ENCODE measurements at regions of chr5 and their contacts with region 1.

Region 1: GRCh38 chr5:137320056-137321045 is 178.8 kb downstream of the SPOCK1 start:
- DNase-seq: peak; percentile 22
- H3K4me3 Mint-ChIP-seq: no peak overlapping the region
- H3K27ac Mint-ChIP-seq: no peak overlapping the region
- H3K4me1 Mint-ChIP-seq: no peaks in the 10 kb centered on the region
- H3K27me3 Mint-ChIP-seq: peaks cover 11% of the 10 kb centered on the region

Region 2: DNA sequence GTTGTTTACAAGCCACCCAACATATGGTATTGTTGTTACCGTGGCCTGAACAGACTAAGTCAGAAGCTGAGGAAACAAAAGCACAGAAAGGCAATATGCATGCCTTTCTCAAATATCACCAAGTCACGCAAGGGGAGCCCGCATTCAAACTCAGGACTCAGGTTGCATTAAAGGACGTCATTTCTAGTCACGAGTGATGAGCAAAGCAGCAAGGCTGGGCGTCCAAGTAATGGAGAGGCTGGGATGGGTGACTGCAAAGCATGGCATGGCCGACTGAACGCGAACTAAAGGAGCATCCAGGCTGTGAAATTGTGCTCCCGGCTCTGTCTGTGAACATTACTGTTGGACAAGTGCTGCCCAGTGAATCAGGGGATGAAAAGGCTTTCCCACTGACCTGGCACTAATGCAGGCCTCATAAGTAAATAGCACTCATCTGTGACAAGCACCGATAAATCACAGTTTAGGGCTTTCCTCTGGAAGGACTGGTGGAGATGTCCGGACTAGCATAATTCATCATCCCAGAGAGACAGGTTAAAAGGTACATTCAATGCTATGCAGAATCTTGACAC is 24.1 kb before region 1 on chr5:
- CTCF ChIA-PET with region 1: no interaction called
- POLR2A ChIA-PET with region 1: no interaction called
- DNase-seq: no peak
- H3K4me3 Mint-ChIP-seq: no peak overlapping the region
- H3K27ac Mint-ChIP-seq: no peak overlapping the region
- H3K4me1 Mint-ChIP-seq: no peaks in the 10 kb centered on the region
- H3K27me3 Mint-ChIP-seq: peaks cover 2% of the 10 kb centered on the region

Region 3: GRCh38 chr5:137344723-137345322 is 24.5 kb after region 1 on chr5:
- CTCF ChIA-PET with region 1: interaction called, 12 read pairs
- POLR2A ChIA-PET with region 1: no interaction called
- DNase-seq: peak; percentile 20
- H3K4me3 Mint-ChIP-seq: no peak overlapping the region
- H3K27ac Mint-ChIP-seq: no peak overlapping the region
- H3K4me1 Mint-ChIP-seq: no peaks in the 10 kb centered on the region
- H3K27me3 Mint-ChIP-seq: no peaks in the 10 kb centered on the region

Region 4: GRCh38 chr5:137498736-137499505 is 178.6 kb after region 1 on chr5 and contains the start of gene SPOCK1:
- CTCF ChIA-PET with region 1: interaction called, 46 read pairs
- POLR2A ChIA-PET with region 1: no interaction called
- DNase-seq: peak; percentile 64
- H3K4me3 Mint-ChIP-seq: no peak within 1 kb of the TSS
- H3K27ac Mint-ChIP-seq: no peak within 1 kb of the TSS
- H3K4me1 Mint-ChIP-seq: no peaks in the 10 kb centered on the region
- H3K27me3 Mint-ChIP-seq: peaks cover 27% of the 10 kb centered on the region
- total RNA-seq, gene SPOCK1: 0.73 to 0.86 TPM